ENCODE measurements at regions of chr19 and their contacts with region 1.

Region 1: GRCh38 chr19:4400135-4400936 is at the start of gene SH3GL1:
- DNase-seq: peak; percentile 87 to 98 (median 92)
- ATAC-seq: peak; percentile 87
- H3K4me3 ChIP-seq: peak within 1 kb of the TSS; percentile 87
- H3K4me3 Mint-ChIP-seq: peak within 1 kb of the TSS; percentile 80 to 99 (median 92)
- H3K27ac ChIP-seq: peak within 1 kb of the TSS; percentile 97
- H3K27ac Mint-ChIP-seq: peak within 1 kb of the TSS; percentile 87 to 100 (median 99)
- H3K4me1 ChIP-seq: peaks cover 31 to 38% of the 10 kb centered on the region in 2 donors
- H3K4me1 Mint-ChIP-seq: peaks cover 23 to 75% (median 60%) of the 10 kb centered on the region in 7 donors
- H3K27me3 ChIP-seq: no peaks in the 10 kb centered on the region
- H3K27me3 Mint-ChIP-seq: no peaks in the 10 kb centered on the region
- total RNA-seq, gene SH3GL1: 37.1 to 77.0 (median 38.6) TPM

Region 2: GRCh38 chr19:3185482-3186376 is 1214.6 kb before region 1 on chr19 and contains the start of gene NCLN:
- CTCF ChIA-PET with region 1: no interaction called
- POLR2A ChIA-PET with region 1: no interaction called
- intact Hi-C with region 1: loop called in 1 of 2 experiments (anchors 5 kb)
- DNase-seq: peak; percentile 92 to 98 (median 95)
- ATAC-seq: peak; percentile 94
- H3K4me3 ChIP-seq: peak within 1 kb of the TSS; percentile 71
- H3K4me3 Mint-ChIP-seq: peak within 1 kb of the TSS; percentile 86 to 99 (median 94)
- H3K27ac ChIP-seq: peak within 1 kb of the TSS; percentile 74
- H3K27ac Mint-ChIP-seq: peak within 1 kb of the TSS; percentile 89 to 99 (median 91)
- H3K4me1 ChIP-seq: peaks cover 53 to 63% of the 10 kb centered on the region in 2 donors
- H3K4me1 Mint-ChIP-seq: peaks cover 43 to 66% (median 54%) of the 10 kb centered on the region in 7 donors
- H3K27me3 ChIP-seq: no peaks in the 10 kb centered on the region
- H3K27me3 Mint-ChIP-seq: peaks cover 0 to 2% (median 0%) of the 10 kb centered on the region in 5 donors
- total RNA-seq, gene NCLN: 45.4 to 64.7 (median 53.7) TPM

Region 3: DNA sequence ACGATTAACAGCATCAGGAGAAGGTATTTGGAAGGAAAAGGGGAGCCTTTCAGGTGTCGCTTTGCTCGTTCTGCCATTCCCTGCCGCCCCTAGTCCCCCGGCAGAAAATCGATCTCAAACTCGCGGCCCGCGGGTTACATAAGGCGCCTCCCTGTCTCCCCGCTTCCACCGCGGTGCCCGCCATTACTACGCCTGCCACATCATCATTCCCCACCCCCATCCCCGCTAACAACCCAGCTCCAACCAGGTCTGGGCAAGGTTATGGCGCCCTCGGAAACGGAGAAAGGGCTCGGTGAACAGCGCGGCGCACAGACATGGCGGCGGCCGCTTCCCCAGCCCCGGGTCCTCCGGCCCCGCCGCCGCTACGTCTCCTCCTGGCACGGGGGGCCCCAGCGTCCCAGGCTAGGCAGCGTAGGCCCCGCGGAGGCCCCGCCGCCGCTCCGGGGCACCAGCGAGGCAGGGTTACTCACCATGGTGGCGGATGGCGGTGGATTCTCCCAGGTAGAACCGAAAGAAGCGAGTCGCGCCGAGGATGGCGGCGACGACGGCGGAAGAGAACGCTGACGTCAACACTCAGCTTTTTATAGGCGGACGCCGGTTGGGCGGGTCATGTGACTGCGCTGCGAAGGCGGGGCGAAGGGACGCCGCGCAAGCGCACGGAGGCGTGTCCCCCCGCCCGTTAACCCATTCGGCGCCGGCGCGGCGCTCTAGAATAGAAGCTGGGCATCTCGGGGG is 415.3 kb before region 1 on chr19 and contains the start of gene EEF2:
- CTCF ChIA-PET with region 1: no interaction called
- POLR2A ChIA-PET with region 1: interaction called, 3 read pairs
- intact Hi-C with region 1: loop called (anchors 2 to 5 kb)
- DNase-seq: peak; percentile 89 to 96 (median 93)
- ATAC-seq: peak; percentile 72
- H3K4me3 ChIP-seq: peak within 1 kb of the TSS; percentile 98
- H3K4me3 Mint-ChIP-seq: peak within 1 kb of the TSS; percentile 91 to 99 (median 98)
- H3K27ac ChIP-seq: peak within 1 kb of the TSS; percentile 87
- H3K27ac Mint-ChIP-seq: peak within 1 kb of the TSS; percentile 93 to 99 (median 96)
- H3K4me1 ChIP-seq: peaks cover 37 to 43% of the 10 kb centered on the region in 2 donors
- H3K4me1 Mint-ChIP-seq: peaks cover 30 to 57% (median 48%) of the 10 kb centered on the region in 7 donors
- H3K27me3 ChIP-seq: no peaks in the 10 kb centered on the region
- H3K27me3 Mint-ChIP-seq: no peaks in the 10 kb centered on the region
- total RNA-seq, gene EEF2: 1,791 to 2,674 (median 2,346) TPM

Region 4: DNA sequence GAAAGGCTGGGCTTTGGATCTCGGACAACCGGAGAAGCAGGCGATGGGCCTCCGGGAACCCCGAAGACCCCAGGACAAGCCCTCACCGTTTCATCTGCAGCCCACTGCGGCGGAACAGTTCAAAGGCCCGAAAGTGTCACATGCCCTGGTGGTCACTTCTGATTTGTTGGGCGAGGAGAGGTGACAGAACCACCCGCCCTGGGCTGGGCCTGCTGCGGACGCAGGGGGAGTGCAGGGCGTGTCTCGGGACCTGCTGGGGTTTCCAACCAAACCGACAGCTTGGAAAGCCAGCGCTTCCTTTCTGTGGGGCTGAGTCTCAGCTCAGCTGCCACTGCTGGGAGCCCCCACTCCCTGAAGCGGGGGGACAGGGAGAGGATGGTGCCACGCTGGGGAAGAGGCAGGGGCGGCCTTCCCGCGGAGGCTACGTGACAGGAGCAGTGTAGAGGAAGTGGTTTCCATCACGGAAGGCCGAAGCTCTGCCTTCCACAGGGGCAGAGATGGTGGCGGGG is 310.9 kb before region 1 on chr19:
- CTCF ChIA-PET with region 1: no interaction called
- POLR2A ChIA-PET with region 1: no interaction called
- intact Hi-C with region 1: no loop called
- DNase-seq: peak in 7 of 9 donors; percentile 16 to 69 (median 26)
- ATAC-seq: peak; percentile 79
- H3K4me3 ChIP-seq: peak overlapping the region; percentile 27
- H3K4me3 Mint-ChIP-seq: peak overlapping the region; percentile 76 to 83 (median 79)
- H3K27ac ChIP-seq: peak overlapping the region; percentile 67
- H3K27ac Mint-ChIP-seq: peak overlapping the region; percentile 82 to 97 (median 94)
- H3K4me1 ChIP-seq: peaks cover 46% of the 10 kb centered on the region in 2 donors
- H3K4me1 Mint-ChIP-seq: peaks cover 23 to 53% (median 47%) of the 10 kb centered on the region in 7 donors
- H3K27me3 ChIP-seq: no peaks in the 10 kb centered on the region
- H3K27me3 Mint-ChIP-seq: no peaks in the 10 kb centered on the region

Region 5: DNA sequence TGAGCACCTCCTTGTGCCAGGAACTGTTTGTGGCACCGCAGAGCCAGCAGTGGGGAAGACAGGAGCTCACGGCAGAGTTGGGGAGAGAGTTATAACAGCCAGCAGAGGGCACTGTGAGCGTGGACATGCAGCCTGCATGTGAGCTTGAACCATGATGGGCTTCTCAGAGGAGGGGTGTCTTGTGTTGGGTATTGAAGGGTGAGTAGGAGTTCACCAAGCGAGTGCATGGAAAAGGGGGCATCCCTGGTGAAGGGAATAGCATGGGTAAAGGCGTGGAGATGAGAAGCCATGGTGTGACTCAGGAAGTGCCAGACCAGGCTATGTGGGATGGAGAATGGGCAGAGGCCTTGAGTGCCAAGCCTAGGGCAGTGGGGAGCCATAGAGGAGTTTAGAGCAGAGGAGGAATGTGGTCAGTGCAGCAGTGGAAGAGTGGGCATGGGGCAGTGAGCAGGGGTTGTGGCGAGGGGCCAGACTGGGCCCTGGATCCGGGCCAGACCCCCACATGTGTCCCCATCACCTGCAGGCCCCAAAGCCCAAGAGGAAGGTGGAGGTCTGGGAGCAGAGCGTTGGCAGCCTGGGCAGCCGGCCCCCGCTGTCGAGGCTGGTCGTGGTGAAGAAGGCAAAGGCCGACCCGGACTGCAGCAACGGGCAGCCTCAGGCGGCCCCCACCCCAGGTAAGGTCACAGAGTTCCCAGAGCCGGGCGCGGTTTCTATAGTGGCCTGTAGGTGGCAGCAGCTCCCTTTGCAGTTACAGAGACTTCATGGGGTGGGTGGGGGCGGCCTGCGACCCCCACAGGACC is 133.0 kb before region 1 on chr19:
- CTCF ChIA-PET with region 1: interaction called, 8 read pairs
- POLR2A ChIA-PET with region 1: interaction called, 5 read pairs
- intact Hi-C with region 1: loop called (anchors 1 kb)
- DNase-seq: peak; percentile 33 to 68 (median 48)
- ATAC-seq: peak; percentile 76
- H3K4me3 ChIP-seq: no peak overlapping the region
- H3K4me3 Mint-ChIP-seq: peak overlapping the region in 1 of 10 donors; percentile 19
- H3K27ac ChIP-seq: no peak overlapping the region
- H3K27ac Mint-ChIP-seq: peak overlapping the region in 6 of 9 donors; percentile 0 to 90 (median 60)
- H3K4me1 ChIP-seq: peaks cover 0 to 6% of the 10 kb centered on the region in 2 donors
- H3K4me1 Mint-ChIP-seq: peaks cover 18 to 29% (median 23%) of the 10 kb centered on the region in 7 donors
- H3K27me3 ChIP-seq: no peaks in the 10 kb centered on the region
- H3K27me3 Mint-ChIP-seq: no peaks in the 10 kb centered on the region

Region 6: DNA sequence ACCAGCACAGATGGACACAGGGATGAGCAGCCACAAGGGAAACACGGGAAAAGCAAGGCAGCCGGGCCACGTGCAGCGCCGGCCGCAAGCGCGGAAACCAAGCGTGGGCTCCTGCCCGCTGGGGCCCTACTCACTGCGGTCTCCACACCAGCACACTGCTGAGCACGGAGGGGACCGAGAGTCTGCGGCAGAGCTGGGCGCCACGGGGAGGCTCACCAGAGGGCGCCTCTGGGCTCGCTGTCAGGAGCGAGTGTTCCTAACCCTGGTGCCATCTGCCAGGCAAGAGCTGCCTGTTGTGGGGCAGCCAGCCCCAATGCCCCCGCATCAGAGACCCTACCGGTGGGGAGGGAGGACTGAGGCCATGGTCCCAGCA is 30.5 kb before region 1 on chr19:
- CTCF ChIA-PET with region 1: interaction called, 11 read pairs
- POLR2A ChIA-PET with region 1: interaction called, 29 read pairs
- intact Hi-C with region 1: loop called (anchors 1 kb)
- DNase-seq: peak; percentile 55 to 80 (median 67)
- ATAC-seq: peak; percentile 80
- H3K4me3 ChIP-seq: peak overlapping the region; percentile 76
- H3K4me3 Mint-ChIP-seq: peak overlapping the region; percentile 87 to 97 (median 94)
- H3K27ac ChIP-seq: peak overlapping the region; percentile 68
- H3K27ac Mint-ChIP-seq: peak overlapping the region; percentile 81 to 96 (median 94)
- H3K4me1 ChIP-seq: peaks cover 21 to 32% of the 10 kb centered on the region in 2 donors
- H3K4me1 Mint-ChIP-seq: peaks cover 22 to 57% (median 42%) of the 10 kb centered on the region in 7 donors
- H3K27me3 ChIP-seq: no peaks in the 10 kb centered on the region
- H3K27me3 Mint-ChIP-seq: no peaks in the 10 kb centered on the region

Region 7: GRCh38 chr19:4524808-4525562 is 124.6 kb after region 1 on chr19:
- CTCF ChIA-PET with region 1: no interaction called
- POLR2A ChIA-PET with region 1: no interaction called
- intact Hi-C with region 1: loop called in 1 of 2 experiments (anchors 1 kb)
- DNase-seq: peak; percentile 19 to 70 (median 59)
- ATAC-seq: peak; percentile 77
- H3K4me3 ChIP-seq: no peak overlapping the region
- H3K4me3 Mint-ChIP-seq: no peak overlapping the region
- H3K27ac ChIP-seq: no peak overlapping the region
- H3K27ac Mint-ChIP-seq: no peak overlapping the region
- H3K4me1 ChIP-seq: no peaks in the 10 kb centered on the region
- H3K4me1 Mint-ChIP-seq: no peaks in the 10 kb centered on the region
- H3K27me3 ChIP-seq: no peaks in the 10 kb centered on the region
- H3K27me3 Mint-ChIP-seq: peaks cover 0 to 4% (median 0%) of the 10 kb centered on the region in 5 donors

Region 8: DNA sequence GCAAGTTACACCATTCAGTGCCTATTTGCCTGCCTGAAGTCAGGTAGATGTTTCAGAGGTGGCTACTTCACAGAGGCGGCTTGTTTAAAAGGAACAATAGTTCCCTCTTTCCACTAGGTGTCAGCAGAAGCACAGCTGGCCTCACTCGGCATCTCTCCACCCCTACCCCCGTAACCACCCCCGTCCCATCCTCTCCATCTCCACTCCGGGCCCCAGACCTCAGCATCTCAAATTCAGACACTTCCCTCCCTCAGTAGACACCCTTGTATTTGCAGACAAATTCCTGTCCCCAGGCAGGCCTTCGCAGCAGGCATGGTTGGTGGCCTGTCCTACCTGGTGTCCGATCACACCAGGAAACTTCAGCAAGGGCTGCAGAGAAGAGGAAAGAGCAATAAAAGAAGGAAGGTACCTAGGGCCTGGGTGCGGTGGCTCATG is 332.4 kb after region 1 on chr19:
- CTCF ChIA-PET with region 1: no interaction called
- POLR2A ChIA-PET with region 1: no interaction called
- intact Hi-C with region 1: no loop called
- DNase-seq: peak in 8 of 9 donors; percentile 38 to 66 (median 54)
- ATAC-seq: peak; percentile 95
- H3K4me3 ChIP-seq: peak overlapping the region; percentile 24
- H3K4me3 Mint-ChIP-seq: peak overlapping the region in 6 of 10 donors; percentile 2 to 77 (median 35)
- H3K27ac ChIP-seq: no peak overlapping the region
- H3K27ac Mint-ChIP-seq: peak overlapping the region in 4 of 9 donors; percentile 1 to 78 (median 52)
- H3K4me1 ChIP-seq: peaks cover 3 to 4% of the 10 kb centered on the region in 2 donors
- H3K4me1 Mint-ChIP-seq: peaks cover 4 to 11% (median 6%) of the 10 kb centered on the region in 7 donors
- H3K27me3 ChIP-seq: no peaks in the 10 kb centered on the region
- H3K27me3 Mint-ChIP-seq: peaks cover 0 to 14% (median 5%) of the 10 kb centered on the region in 5 donors

Region 9: DNA sequence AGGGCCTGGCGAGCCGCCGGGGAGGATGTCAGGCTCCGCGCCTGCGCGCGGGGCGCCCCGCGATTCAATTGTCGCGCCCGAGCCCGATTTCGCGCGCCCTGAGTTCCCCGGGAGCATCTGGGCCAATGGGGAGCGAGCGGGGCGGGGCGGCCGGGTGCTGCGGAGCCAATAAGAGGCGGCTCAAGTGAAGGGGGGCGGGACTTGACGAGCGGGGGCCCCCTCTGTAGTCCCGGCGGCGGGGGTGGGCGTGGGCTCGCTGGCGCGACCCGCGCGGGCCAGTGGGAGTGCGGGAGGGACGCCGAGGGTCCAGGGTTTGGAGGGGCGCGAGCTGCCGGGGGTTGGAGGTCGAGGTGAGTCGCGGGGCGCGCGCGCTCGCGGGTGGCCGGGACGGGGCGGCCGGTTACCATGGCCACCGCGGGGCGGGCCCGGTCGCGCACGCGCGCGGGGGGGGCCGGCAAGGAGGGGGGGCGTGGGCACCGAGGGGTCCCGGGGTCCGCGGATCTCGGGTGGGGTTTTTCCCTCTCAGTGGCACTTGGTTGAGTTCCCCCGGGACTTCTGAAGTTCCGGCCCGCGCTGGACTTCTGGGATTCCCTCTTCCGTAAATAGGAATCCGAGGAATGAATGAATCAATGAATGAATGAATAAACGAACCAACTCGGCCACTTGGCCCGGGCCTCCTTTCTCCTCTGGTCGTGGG is 509.7 kb after region 1 on chr19:
- CTCF ChIA-PET with region 1: no interaction called
- POLR2A ChIA-PET with region 1: no interaction called
- intact Hi-C with region 1: loop called in 1 of 2 experiments (anchors 5 kb)
- DNase-seq: peak; percentile 88 to 96 (median 94)
- ATAC-seq: peak; percentile 95
- H3K4me3 ChIP-seq: peak overlapping the region; percentile 61
- H3K4me3 Mint-ChIP-seq: peak overlapping the region; percentile 93 to 100 (median 99)
- H3K27ac ChIP-seq: peak overlapping the region; percentile 67
- H3K27ac Mint-ChIP-seq: peak overlapping the region in 4 of 9 donors; percentile 86 to 99 (median 89)
- H3K4me1 ChIP-seq: peaks cover 48 to 54% of the 10 kb centered on the region in 2 donors
- H3K4me1 Mint-ChIP-seq: peaks cover 44 to 74% (median 58%) of the 10 kb centered on the region in 7 donors
- H3K27me3 ChIP-seq: no peaks in the 10 kb centered on the region
- H3K27me3 Mint-ChIP-seq: no peaks in the 10 kb centered on the region

Measured in naive thymus-derived CD4-positive, alpha-beta T cell (primary cell).